ENCODE measurements at regions of chr3 and their contacts with region 1.

Region 1: GRCh38 chr3:123449102-123449996 is 459 bp upstream of the ADCY5 start:
- DNase-seq: peak; percentile 32 to 60
- ATAC-seq: peak; percentile 36 to 78 (median 54)
- H3K4me3 ChIP-seq: peak overlapping the region; percentile 56 to 81 (median 72)
- H3K27ac ChIP-seq: peak overlapping the region; percentile 81 to 97 (median 91)
- H3K4me1 ChIP-seq: peaks cover 0 to 35% (median 19%) of the 10 kb centered on the region in 9 donors
- H3K27me3 ChIP-seq: peaks cover 0 to 75% (median 27%) of the 10 kb centered on the region in 7 donors
- CTCF ChIP-seq: no peak

Region 2: DNA sequence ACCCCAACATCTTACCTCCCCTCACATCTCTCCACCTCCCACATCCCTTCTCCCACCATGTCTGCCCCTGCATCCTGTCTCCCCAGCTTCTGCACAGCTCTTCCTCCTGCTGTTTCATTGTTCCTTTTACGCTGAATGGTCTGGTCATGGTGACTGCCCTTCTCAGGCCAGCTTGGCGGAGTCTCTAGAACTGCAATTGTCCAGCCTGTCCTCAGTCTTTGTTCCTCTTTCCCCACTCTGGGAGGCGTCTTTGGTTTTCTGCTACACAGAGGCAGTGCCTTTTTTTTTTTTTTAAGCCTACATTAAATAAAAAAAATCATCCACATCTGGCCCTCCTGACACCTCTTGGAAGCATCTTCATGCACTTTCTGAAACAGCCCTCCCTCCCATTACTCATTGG is 296.7 kb before region 1 on chr3:
- intact Hi-C with region 1: no loop called
- DNase-seq: no peak
- ATAC-seq: peak in 1 of 8 donors; percentile 30
- H3K4me3 ChIP-seq: no peak overlapping the region
- H3K27ac ChIP-seq: peak overlapping the region in 1 of 10 donors; percentile 57
- H3K4me1 ChIP-seq: peaks cover 0 to 30% (median 5%) of the 10 kb centered on the region in 9 donors
- H3K27me3 ChIP-seq: no peaks in the 10 kb centered on the region
- CTCF ChIP-seq: no peak

Region 3: GRCh38 chr3:123314359-123315270 is 134.7 kb before region 1 on chr3:
- intact Hi-C with region 1: no loop called
- DNase-seq: no peak
- ATAC-seq: peak in 6 of 8 donors; percentile 24 to 42 (median 36)
- H3K4me3 ChIP-seq: no peak overlapping the region
- H3K27ac ChIP-seq: peak overlapping the region in 8 of 10 donors; percentile 21 to 69 (median 49)
- H3K4me1 ChIP-seq: peaks cover 0 to 32% (median 12%) of the 10 kb centered on the region in 9 donors
- H3K27me3 ChIP-seq: peaks cover 0 to 12% (median 0%) of the 10 kb centered on the region in 7 donors
- CTCF ChIP-seq: no peak

Region 4: DNA sequence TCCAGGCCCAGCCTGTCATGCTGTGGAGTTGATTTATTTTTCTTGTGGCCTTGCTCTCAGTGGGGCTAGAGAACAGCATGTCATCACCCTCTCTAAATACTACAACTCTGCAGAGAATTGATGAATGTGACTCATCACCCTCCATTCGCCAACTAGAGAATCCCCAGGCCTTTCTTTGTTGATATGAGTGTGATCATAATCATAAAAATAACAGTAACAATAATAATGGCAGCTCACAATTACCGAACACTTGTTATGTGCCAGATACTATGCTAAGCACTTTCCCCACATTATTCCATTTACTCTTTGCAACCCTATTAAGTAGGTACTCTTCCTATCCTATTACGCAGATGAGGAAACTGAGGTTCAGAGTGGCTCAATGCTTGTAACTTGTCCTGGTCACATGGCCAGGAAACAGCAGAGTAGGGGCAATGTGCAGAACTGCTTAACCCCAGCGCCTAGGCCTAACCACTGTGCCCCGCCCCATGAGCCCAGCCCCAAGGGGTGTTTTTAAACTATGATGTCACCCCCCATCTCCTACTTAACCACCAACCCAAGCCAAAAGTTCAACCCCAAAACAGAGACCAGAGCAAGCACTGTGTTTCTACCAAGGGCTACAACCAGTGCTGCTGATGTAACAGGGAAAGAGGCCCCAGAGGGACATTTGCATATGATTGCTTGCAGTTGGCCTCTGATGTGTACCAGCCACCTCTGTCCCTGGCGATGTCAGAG is 105.0 kb before region 1 on chr3:
- intact Hi-C with region 1: loop called in 1 of 10 experiments (anchors 5 kb)
- DNase-seq: no peak
- ATAC-seq: peak in 5 of 8 donors; percentile 10 to 32 (median 22)
- H3K4me3 ChIP-seq: no peak overlapping the region
- H3K27ac ChIP-seq: peak overlapping the region; percentile 31 to 96 (median 77)
- H3K4me1 ChIP-seq: peaks cover 28 to 99% (median 77%) of the 10 kb centered on the region in 9 donors
- H3K27me3 ChIP-seq: peaks cover 0 to 4% (median 0%) of the 10 kb centered on the region in 7 donors
- CTCF ChIP-seq: no peak

Region 5: DNA sequence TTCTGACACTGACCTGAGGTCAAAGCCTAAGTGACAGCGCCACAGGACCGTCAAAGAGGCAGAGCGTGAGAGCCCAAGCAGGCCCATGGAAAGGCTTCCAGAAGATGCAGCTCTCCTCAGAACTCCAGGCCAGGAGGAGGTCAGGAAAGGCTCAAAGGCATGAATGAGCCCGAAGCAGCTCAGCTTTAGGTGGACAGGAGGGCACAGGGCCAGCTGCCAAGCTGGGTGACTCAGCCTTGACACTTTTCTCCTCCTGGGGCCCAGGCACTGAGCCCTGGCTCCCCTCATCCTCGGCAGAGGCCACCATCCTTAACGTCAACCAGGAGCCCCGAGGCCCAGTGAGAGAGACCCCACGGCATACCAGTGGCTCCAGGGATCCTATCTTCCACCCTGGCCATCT is 63.4 kb before region 1 on chr3:
- intact Hi-C with region 1: loop called in 2 of 10 experiments (anchors 5 kb)
- DNase-seq: peak; percentile 59 to 69
- ATAC-seq: peak; percentile 24 to 71 (median 48)
- H3K4me3 ChIP-seq: peak overlapping the region in 5 of 10 donors; percentile 5 to 37 (median 24)
- H3K27ac ChIP-seq: peak overlapping the region; percentile 66 to 94 (median 87)
- H3K4me1 ChIP-seq: peaks cover 19 to 99% (median 87%) of the 10 kb centered on the region in 9 donors
- H3K27me3 ChIP-seq: no peaks in the 10 kb centered on the region
- CTCF ChIP-seq: no peak

Region 6: GRCh38 chr3:123476967-123477750 is 27.8 kb after region 1 on chr3:
- intact Hi-C with region 1: no loop called
- DNase-seq: no peak
- ATAC-seq: peak in 2 of 8 donors; percentile 24 to 43
- H3K4me3 ChIP-seq: no peak overlapping the region
- H3K27ac ChIP-seq: no peak overlapping the region
- H3K4me1 ChIP-seq: peaks cover 0 to 4% (median 0%) of the 10 kb centered on the region in 9 donors
- H3K27me3 ChIP-seq: peaks cover 0 to 6% (median 0%) of the 10 kb centered on the region in 7 donors
- CTCF ChIP-seq: no peak

Region 7: GRCh38 chr3:123489400-123490004 is 40.2 kb after region 1 on chr3:
- intact Hi-C with region 1: loop called in 7 of 10 experiments (anchors 2 to 5 kb)
- DNase-seq: peak; percentile 76 to 80
- ATAC-seq: peak; percentile 75 to 90 (median 85)
- H3K4me3 ChIP-seq: peak overlapping the region in 2 of 10 donors; percentile 0 to 8
- H3K27ac ChIP-seq: peak overlapping the region in 7 of 10 donors; percentile 31 to 74 (median 68)
- H3K4me1 ChIP-seq: peaks cover 0 to 52% (median 7%) of the 10 kb centered on the region in 9 donors
- H3K27me3 ChIP-seq: no peaks in the 10 kb centered on the region
- CTCF ChIP-seq: peak; percentile 61 to 91 (median 88)

Region 8: GRCh38 chr3:123559040-123559861 is 109.9 kb after region 1 on chr3:
- intact Hi-C with region 1: loop called in 1 of 10 experiments (anchors 10 kb)
- DNase-seq: no peak
- ATAC-seq: peak in 2 of 8 donors; percentile 48 to 56
- H3K4me3 ChIP-seq: no peak overlapping the region
- H3K27ac ChIP-seq: no peak overlapping the region
- H3K4me1 ChIP-seq: peaks cover 0 to 3% (median 0%) of the 10 kb centered on the region in 9 donors
- H3K27me3 ChIP-seq: no peaks in the 10 kb centered on the region
- CTCF ChIP-seq: peak; percentile 75 to 93 (median 85)

Measured in heart right ventricle (tissue), 16 donors.